ENCODE measurements at regions of chr18 and their contacts with region 1.

Region 1: DNA sequence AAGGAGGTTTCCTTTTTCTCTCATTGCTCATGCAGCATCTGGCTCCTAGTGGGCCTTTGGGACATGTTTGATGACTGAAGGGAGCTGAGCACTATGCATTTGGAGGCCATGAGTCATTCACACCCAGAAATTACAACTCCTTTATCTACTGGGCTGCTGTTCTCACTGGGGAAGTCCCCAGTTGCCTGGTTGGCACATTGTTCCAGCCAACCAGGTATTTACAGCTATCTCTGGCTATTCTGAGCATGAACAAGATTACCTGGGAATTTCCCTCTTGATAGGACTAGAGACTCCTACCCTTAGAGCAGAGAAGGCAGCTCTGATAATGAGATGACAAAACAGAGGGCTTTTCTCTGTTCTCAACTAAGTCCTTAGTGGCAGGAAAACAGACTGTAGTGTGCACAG is 206.5 kb downstream of the SETBP1 start:
- DNase-seq: peak; percentile 74
- H3K4me3 Mint-ChIP-seq: no peak overlapping the region
- H3K27ac Mint-ChIP-seq: peak overlapping the region; percentile 88
- H3K4me1 Mint-ChIP-seq: peaks cover 25% of the 10 kb centered on the region
- H3K27me3 Mint-ChIP-seq: peaks cover 3% of the 10 kb centered on the region

Region 2: GRCh38 chr18:44715842-44716241 is 171.4 kb before region 1 on chr18:
- CTCF ChIA-PET with region 1: interaction called, 3 read pairs
- POLR2A ChIA-PET with region 1: interaction called, 8 read pairs
- intact Hi-C with region 1: loop called (anchors 1 kb)
- DNase-seq: no peak
- H3K4me3 Mint-ChIP-seq: no peak overlapping the region
- H3K27ac Mint-ChIP-seq: no peak overlapping the region
- H3K4me1 Mint-ChIP-seq: peaks cover 21% of the 10 kb centered on the region
- H3K27me3 Mint-ChIP-seq: peaks cover 7% of the 10 kb centered on the region

Region 3: DNA sequence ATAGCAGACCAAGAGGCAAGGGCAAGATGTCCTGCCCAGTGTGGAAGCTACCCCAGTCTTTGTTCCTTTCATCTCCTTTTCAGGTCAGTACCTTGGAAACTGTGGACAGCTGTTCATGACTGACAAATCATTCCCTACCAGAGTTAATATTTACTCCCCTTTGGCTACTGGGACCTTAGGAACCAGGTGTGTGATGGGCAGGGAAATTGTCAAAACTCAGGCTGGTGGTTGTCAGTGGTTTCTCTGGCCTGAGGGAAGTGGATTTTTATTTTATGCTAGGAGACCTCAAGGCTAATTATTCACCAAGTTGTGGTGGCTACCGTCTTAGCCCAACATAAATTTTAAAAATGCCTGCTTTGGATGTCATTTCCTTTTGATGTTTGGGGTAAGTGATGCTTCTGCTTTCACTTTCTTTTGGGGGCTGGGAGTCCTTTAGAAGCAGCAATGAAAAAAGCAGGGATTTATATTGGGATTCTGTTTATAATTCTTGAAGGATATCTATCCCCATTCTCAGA is 87.3 kb before region 1 on chr18:
- CTCF ChIA-PET with region 1: interaction called, 4 read pairs
- POLR2A ChIA-PET with region 1: interaction called, 6 read pairs
- intact Hi-C with region 1: loop called (anchors 1 kb)
- DNase-seq: no peak
- H3K4me3 Mint-ChIP-seq: no peak overlapping the region
- H3K27ac Mint-ChIP-seq: no peak overlapping the region
- H3K4me1 Mint-ChIP-seq: peaks cover 43% of the 10 kb centered on the region
- H3K27me3 Mint-ChIP-seq: peaks cover 3% of the 10 kb centered on the region

Region 4: DNA sequence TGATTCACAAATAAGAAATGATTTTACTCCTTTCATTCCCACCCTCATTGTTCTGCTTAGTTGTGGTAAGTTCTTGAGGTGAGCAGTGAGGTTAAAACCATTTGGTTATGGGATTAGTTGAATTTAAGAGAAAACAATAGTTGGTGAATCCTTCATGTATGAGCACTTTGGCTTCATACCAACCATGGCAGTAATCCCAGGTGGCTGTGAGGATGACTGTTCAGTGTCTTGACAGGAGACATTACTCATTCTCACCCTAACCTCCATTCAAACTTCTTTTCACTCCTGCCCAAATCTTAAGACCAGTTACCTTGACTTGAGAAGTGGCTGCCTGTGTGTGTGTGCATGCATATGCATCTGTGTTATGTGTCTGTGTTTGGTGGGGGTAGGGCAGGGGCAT is 63.4 kb before region 1 on chr18:
- CTCF ChIA-PET with region 1: interaction called, 3 read pairs
- POLR2A ChIA-PET with region 1: interaction called, 6 read pairs
- intact Hi-C with region 1: loop called (anchors 1 kb)
- DNase-seq: peak; percentile 28
- H3K4me3 Mint-ChIP-seq: no peak overlapping the region
- H3K27ac Mint-ChIP-seq: no peak overlapping the region
- H3K4me1 Mint-ChIP-seq: peaks cover 16% of the 10 kb centered on the region
- H3K27me3 Mint-ChIP-seq: peaks cover 20% of the 10 kb centered on the region

Region 5: GRCh38 chr18:44838971-44839666 is 48.1 kb before region 1 on chr18:
- CTCF ChIA-PET with region 1: no interaction called
- POLR2A ChIA-PET with region 1: no interaction called
- intact Hi-C with region 1: loop called (anchors 1 kb)
- DNase-seq: peak; percentile 83
- H3K4me3 Mint-ChIP-seq: no peak overlapping the region
- H3K27ac Mint-ChIP-seq: no peak overlapping the region
- H3K4me1 Mint-ChIP-seq: peaks cover 17% of the 10 kb centered on the region
- H3K27me3 Mint-ChIP-seq: no peaks in the 10 kb centered on the region

Region 6: DNA sequence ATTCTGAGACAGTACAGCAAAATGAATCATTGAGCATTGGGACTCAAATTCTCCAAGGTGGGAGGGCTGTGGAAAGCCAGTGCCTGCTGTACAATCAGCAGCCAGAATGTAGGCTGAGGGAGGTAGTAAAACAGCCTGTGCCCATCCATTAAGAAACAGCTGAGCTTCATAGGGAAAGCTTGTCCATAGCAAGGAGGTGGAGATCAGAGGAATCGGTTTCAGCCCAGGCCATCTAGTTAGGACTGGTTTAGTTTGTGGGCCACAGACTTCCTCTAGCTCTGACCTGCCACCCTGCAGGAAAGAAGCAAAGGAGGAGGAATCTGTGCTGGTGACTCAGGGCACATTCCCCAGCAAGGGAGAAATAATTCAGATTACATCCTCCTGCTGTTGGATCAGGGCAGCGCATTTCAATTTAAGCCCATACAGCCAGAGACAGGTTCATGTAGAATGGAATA is 126.8 kb after region 1 on chr18:
- CTCF ChIA-PET with region 1: no interaction called
- POLR2A ChIA-PET with region 1: no interaction called
- intact Hi-C with region 1: no loop called
- DNase-seq: no peak
- H3K4me3 Mint-ChIP-seq: no peak overlapping the region
- H3K27ac Mint-ChIP-seq: no peak overlapping the region
- H3K4me1 Mint-ChIP-seq: peaks cover 7% of the 10 kb centered on the region
- H3K27me3 Mint-ChIP-seq: peaks cover 2% of the 10 kb centered on the region

Region 7: DNA sequence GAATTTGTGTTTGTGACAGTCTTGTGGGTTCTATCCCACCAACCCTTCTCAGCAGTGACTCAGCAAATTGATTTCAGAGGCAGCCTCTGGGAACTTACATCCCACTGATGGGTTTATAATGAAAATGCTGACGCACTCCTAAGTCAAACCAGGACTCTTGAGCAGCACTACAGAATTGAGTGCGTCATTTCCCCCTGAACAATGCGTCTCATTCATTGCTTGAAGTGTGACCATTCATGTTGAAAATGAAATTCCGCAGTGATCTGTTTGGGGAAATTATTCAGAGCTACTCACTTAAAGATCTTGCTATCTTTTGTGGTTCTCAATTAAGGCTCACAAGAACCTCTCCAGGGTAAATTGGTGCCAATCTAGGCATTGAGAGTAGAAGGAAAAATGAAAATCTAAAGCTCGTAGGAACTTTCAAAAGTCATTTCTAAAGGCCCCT is 310.3 kb after region 1 on chr18:
- CTCF ChIA-PET with region 1: no interaction called
- POLR2A ChIA-PET with region 1: no interaction called
- intact Hi-C with region 1: loop called (anchors 1 kb)
- DNase-seq: peak; percentile 60
- H3K4me3 Mint-ChIP-seq: no peak overlapping the region
- H3K27ac Mint-ChIP-seq: no peak overlapping the region
- H3K4me1 Mint-ChIP-seq: peaks cover 9% of the 10 kb centered on the region
- H3K27me3 Mint-ChIP-seq: peaks cover 21% of the 10 kb centered on the region